MCF 10A (cell line): ENCODE measurements at regions of chr2 and their contacts with region 1.

Region 1: GRCh38 chr2:131682122-131682944 is 154.6 kb downstream of the CCDC74A start:
- DNase-seq: peak; percentile 86
- H3K4me3 Mint-ChIP-seq: peak overlapping the region; percentile 80
- H3K27ac Mint-ChIP-seq: peak overlapping the region; percentile 63
- H3K4me1 Mint-ChIP-seq: peaks cover 27% of the 10 kb centered on the region
- H3K27me3 Mint-ChIP-seq: peaks cover 6% of the 10 kb centered on the region
- CTCF ChIP-seq: peak; percentile 31

Region 2: DNA sequence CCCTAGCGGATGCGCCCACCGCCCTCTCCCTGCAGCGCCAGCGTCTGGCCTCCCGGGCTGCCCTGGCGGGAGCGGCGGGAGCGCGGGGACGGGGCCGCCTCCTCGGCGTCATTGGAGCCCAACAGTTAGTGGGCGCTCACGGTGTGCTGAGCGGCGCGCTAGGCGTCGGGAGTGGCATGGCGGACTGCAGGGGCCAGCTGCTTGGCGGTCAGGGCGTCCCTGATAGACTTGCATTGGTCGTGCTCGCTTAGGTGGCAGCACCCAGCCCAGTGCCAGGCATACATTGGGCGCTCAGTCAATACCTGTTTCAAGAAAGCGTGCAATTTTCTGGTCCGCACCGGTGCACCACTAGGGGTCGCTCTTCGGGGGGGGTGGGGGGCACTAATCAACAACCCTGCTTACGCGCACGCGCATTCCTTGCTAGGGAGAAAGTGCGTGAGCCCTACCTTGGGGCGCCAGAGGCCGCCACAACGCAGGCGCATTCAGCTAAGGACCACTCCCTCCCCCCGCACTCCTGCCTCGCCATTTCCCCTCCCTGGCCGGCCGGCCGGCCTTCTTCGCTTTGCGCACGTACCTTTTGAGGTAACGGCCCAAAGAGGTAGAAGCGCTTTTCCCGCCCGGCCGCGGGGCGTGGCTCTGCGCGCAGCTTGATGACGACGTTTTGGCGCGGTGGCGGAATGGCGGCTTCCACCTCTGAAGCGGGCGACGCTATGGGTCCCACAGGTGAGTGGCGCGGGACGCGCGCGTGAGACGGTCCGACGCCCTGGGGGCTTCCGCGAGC is 189.7 kb before region 1 on chr2:
- CTCF ChIA-PET with region 1: interaction called, 10 read pairs
- POLR2A ChIA-PET with region 1: interaction called, 10 read pairs
- intact Hi-C with region 1: loop called (anchors 10 kb)
- DNase-seq: peak; percentile 96
- H3K4me3 Mint-ChIP-seq: peak overlapping the region; percentile 92
- H3K27ac Mint-ChIP-seq: peak overlapping the region; percentile 94
- H3K4me1 Mint-ChIP-seq: peaks cover 12% of the 10 kb centered on the region
- H3K27me3 Mint-ChIP-seq: no peaks in the 10 kb centered on the region
- CTCF ChIP-seq: peak; percentile 67

Region 3: GRCh38 chr2:131801210-131801744 is 118.9 kb after region 1 on chr2:
- CTCF ChIA-PET with region 1: interaction called, 12 read pairs
- POLR2A ChIA-PET with region 1: no interaction called
- intact Hi-C with region 1: no loop called
- DNase-seq: no peak
- H3K4me3 Mint-ChIP-seq: no peak overlapping the region
- H3K27ac Mint-ChIP-seq: no peak overlapping the region
- H3K4me1 Mint-ChIP-seq: no peaks in the 10 kb centered on the region
- H3K27me3 Mint-ChIP-seq: peaks cover 9% of the 10 kb centered on the region
- CTCF ChIP-seq: no peak